ENCODE measurements at regions of chr16 and their contacts with region 1.

Region 1: DNA sequence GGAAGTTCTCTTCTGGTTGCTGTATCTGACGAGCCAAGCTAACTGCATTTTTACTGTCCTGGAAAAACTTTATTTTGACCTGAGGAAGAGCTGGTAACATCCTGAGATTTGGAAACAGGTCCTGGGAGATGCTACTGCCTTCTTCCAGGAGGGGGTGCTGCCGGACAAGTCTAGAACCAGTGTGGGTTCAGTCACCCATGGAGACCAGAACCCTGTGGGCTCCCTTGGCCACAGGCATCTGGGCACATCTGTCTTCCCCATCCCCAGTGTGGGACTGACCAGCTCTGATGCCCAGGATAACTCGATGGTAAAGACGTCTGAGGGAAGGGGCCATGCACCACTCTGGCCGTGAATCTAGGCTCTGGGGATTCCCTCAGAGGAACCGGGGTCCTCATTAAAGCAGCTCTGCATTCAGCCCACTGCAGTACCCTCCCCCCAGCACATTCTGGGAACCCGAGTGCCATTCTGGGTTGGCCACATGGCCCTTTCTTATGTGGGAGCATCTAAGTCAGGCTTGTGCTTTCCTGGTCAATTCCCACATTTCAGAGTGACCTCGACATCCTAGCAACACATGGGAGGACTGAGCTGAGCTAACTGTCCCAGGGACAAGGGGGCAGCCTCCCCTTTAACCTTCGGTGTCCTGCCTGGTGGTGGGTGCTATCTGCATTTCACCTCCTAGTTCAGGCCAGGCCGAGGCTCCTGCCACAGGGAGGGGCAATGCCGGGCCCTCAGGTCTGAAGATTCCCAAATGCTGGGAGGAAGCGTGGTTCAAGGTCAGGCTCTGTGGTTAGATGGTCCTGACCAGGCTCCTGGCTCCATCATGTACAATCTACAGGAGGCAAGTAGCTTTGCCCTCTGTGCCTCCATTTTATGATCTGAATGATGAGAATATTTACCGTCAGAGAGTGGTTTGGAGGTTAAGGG is 6.4 kb downstream of the C16orf86 start:
- DNase-seq: peak; percentile 80 to 87
- H3K4me3 ChIP-seq: no peak overlapping the region
- H3K4me3 Mint-ChIP-seq: no peak overlapping the region
- H3K27ac Mint-ChIP-seq: no peak overlapping the region
- H3K4me1 ChIP-seq: peaks cover 8% of the 10 kb centered on the region
- H3K4me1 Mint-ChIP-seq: peaks cover 4% of the 10 kb centered on the region
- H3K27me3 ChIP-seq: no peaks in the 10 kb centered on the region
- H3K27me3 Mint-ChIP-seq: no peaks in the 10 kb centered on the region
- CTCF ChIP-seq: peak; percentile 91 to 94

Region 2: GRCh38 chr16:67806428-67807147 is 133.6 kb after region 1 on chr16 and contains the starts of genes RANBP10 and TSNAXIP1:
- CTCF ChIA-PET with region 1: interaction called, 13 read pairs
- POLR2A ChIA-PET with region 1: no interaction called
- intact Hi-C with region 1: loop called (anchors 1 kb)
- DNase-seq: peak; percentile 99
- H3K4me3 ChIP-seq: peak within 1 kb of the TSS; percentile 88
- H3K4me3 Mint-ChIP-seq: peak within 1 kb of the TSS; percentile 83
- H3K27ac Mint-ChIP-seq: peak within 1 kb of the TSS; percentile 81
- H3K4me1 ChIP-seq: peaks cover 10% of the 10 kb centered on the region; the same call in 1 of the 2 replicates
- H3K4me1 Mint-ChIP-seq: peaks cover 9% of the 10 kb centered on the region
- H3K27me3 ChIP-seq: no peaks in the 10 kb centered on the region
- H3K27me3 Mint-ChIP-seq: no peaks in the 10 kb centered on the region
- CTCF ChIP-seq: no peak
- total RNA-seq, gene RANBP10: 21.8 and 23.8 TPM in 2 replicates
- total RNA-seq, gene TSNAXIP1: 0.84 and 0.91 TPM in 2 replicates

Region 3: DNA sequence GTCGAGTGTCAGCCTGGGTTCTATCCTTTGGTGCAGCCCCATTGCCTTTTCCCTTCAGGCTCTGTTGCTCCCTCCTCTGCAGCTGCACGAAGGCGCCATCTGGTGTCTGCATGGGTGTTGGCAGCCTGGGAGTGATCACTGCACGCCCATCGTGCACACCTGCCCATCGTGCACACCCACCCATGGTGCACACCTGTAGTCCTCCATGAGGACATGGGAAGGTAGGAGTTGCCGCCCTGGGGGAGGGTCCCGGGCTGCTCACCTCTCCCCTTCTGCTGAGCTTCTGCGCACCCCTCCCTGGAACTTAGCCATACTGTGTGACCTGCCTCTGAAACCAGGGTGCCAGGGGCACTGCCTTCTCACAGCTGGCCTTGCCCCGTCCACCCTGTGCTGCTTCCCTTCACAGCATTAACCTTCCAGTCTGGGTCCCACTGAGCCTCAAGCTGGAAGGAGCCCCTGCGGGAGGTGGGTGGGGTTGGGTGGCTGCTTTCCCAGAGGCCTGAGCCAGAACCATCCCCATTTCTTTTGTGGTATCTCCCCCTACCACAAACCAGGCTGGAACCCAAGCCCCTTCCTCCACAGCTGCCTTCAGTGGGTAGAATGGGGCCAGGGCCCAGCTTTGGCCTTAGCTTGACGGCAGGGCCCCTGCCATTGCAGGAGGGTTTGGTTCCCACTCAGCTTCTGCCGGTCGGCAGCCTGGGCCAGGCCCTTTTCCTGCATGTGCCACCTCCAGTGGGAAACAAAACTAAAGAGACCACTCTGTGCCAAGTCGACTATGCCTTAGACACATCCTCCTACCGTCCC is 255.8 kb after region 1 on chr16:
- CTCF ChIA-PET with region 1: interaction called, 4 read pairs
- POLR2A ChIA-PET with region 1: no interaction called
- intact Hi-C with region 1: loop called (anchors 1 kb)
- DNase-seq: peak; percentile 85 to 88
- H3K4me3 ChIP-seq: no peak overlapping the region
- H3K4me3 Mint-ChIP-seq: no peak overlapping the region
- H3K27ac Mint-ChIP-seq: no peak overlapping the region
- H3K4me1 ChIP-seq: peaks cover under 1% of the 10 kb centered on the region; the same call in 1 of the 2 replicates
- H3K4me1 Mint-ChIP-seq: peaks cover 1% of the 10 kb centered on the region
- H3K27me3 ChIP-seq: no peaks in the 10 kb centered on the region
- H3K27me3 Mint-ChIP-seq: no peaks in the 10 kb centered on the region
- CTCF ChIP-seq: peak; percentile 82 to 98